Activated naive CD4-positive, alpha-beta T cell treated with anti-CD3 and anti-CD28 coated beads for 36 hours (primary cell): ENCODE measurements at regions of chr2 and their contacts with region 1.

Region 1: DNA sequence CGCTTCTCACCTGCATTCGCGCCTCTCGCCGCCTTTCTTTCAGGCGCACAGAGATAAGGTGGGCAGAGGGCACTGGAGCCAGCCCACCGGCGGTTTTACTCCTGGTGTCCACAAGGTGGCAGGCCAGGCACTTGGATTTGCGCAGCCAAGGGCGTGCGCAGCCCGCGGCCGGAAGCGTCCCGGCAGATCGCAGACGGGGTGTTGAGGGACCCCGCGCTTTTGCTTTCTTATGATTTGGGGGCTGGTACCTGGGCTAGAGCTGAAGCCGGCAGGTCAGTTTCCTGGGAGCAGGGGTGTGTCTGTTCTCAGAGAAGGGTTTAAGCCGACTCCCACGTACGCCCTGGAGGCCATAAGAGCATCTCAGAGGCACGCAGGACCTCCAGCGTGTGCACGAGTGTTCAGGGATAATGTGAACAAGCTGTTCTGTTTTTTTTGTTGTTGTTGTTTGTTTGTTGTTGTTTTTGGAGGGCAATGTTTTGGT is 305.6 kb upstream of the CXCR4 start:
- DNase-seq: peak; percentile 88
- H3K4me3 Mint-ChIP-seq: peak overlapping the region; percentile 76
- H3K27ac Mint-ChIP-seq: no peak overlapping the region
- H3K4me1 Mint-ChIP-seq: peaks cover 19% of the 10 kb centered on the region
- H3K27me3 Mint-ChIP-seq: peaks cover 22% of the 10 kb centered on the region

Region 2: GRCh38 chr2:136665736-136666135 is 242.2 kb after region 1 on chr2:
- CTCF ChIA-PET with region 1: no interaction called
- intact Hi-C with region 1: loop called (anchors 1 kb)
- DNase-seq: no peak
- H3K4me3 Mint-ChIP-seq: no peak overlapping the region
- H3K27ac Mint-ChIP-seq: no peak overlapping the region
- H3K4me1 Mint-ChIP-seq: no peaks in the 10 kb centered on the region
- H3K27me3 Mint-ChIP-seq: no peaks in the 10 kb centered on the region

Region 3: DNA sequence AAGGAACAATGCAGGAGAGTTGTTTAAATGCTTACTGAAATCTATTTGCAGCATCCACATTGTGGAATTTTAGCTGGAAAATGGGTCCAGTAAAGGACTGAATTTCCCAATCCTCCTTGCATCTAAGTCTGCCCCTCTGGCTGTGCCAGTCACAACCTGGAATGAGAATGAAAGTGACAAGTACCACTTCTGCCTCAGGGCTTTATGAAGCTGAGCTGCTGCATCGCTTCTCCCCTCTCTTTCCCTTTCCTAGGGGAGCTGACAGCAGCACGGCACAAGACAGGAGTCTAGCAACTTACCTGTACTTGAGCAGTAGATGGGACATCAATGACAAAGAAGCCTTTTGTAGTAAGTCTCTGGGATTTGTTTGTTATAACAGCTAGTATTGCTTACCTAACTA is 314.5 kb after region 1 on chr2:
- CTCF ChIA-PET with region 1: interaction called, 3 read pairs
- intact Hi-C with region 1: loop called (anchors 1 kb)
- DNase-seq: no peak
- H3K4me3 Mint-ChIP-seq: no peak overlapping the region
- H3K27ac Mint-ChIP-seq: no peak overlapping the region
- H3K4me1 Mint-ChIP-seq: no peaks in the 10 kb centered on the region
- H3K27me3 Mint-ChIP-seq: peaks cover 8% of the 10 kb centered on the region

Region 4: GRCh38 chr2:136783856-136784255 is 360.3 kb after region 1 on chr2:
- CTCF ChIA-PET with region 1: no interaction called
- intact Hi-C with region 1: no loop called
- DNase-seq: no peak
- H3K4me3 Mint-ChIP-seq: no peak overlapping the region
- H3K27ac Mint-ChIP-seq: no peak overlapping the region
- H3K4me1 Mint-ChIP-seq: no peaks in the 10 kb centered on the region
- H3K27me3 Mint-ChIP-seq: peaks cover 10% of the 10 kb centered on the region

Region 5: DNA sequence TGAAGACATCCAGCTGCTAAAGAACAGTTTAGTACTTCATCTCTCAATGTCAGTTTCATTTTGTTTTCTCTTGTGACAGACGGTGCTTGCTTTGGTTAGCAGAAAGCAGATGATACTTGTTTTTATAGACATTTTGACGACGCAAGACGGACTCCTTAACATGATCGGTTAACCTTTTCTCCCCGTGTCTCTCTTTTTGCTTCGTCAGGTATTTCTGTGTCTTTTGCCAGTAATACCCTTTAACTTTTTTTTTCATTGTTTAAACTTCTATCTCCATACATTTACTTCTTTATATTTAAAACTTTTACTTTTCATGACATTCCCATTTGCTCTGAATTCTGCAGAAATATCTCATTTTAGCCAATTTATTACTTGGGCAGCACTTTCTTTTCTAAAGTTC is 399.7 kb after region 1 on chr2:
- CTCF ChIA-PET with region 1: no interaction called
- intact Hi-C with region 1: no loop called
- DNase-seq: no peak
- H3K4me3 Mint-ChIP-seq: no peak overlapping the region
- H3K27ac Mint-ChIP-seq: no peak overlapping the region
- H3K4me1 Mint-ChIP-seq: no peaks in the 10 kb centered on the region
- H3K27me3 Mint-ChIP-seq: no peaks in the 10 kb centered on the region